WTC11 (cell line): ENCODE measurements at regions of chr2 and their contacts with region 1.

Region 1: DNA sequence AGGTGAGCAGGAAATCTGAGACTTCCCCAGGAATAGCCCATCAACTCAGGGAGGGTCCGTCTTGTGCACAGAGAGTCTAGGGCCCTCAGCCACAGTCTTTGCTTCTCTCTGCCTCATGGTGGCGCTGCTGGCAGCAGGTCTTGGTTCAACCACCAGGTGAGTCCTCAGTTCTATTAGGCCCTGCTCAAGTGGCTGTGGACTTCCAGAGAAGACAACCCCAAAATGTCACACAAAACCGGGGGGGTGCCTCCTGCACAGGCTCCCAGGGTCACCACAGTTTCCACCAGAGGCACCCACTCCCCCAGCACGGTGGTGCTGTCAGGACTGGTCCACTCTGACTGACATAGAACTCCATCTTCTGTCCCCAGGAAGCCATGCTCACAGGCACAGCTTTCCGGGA is 2.4 kb upstream of the CHRNG start:
- DNase-seq: peak; percentile 73
- ATAC-seq: peak; percentile 75
- H3K4me3 Mint-ChIP-seq: no peak overlapping the region
- H3K27ac Mint-ChIP-seq: no peak overlapping the region
- H3K4me1 Mint-ChIP-seq: peaks cover 25% of the 10 kb centered on the region
- H3K27me3 Mint-ChIP-seq: peaks cover 15% of the 10 kb centered on the region
- CTCF ChIP-seq: peak; percentile 67

Region 2: DNA sequence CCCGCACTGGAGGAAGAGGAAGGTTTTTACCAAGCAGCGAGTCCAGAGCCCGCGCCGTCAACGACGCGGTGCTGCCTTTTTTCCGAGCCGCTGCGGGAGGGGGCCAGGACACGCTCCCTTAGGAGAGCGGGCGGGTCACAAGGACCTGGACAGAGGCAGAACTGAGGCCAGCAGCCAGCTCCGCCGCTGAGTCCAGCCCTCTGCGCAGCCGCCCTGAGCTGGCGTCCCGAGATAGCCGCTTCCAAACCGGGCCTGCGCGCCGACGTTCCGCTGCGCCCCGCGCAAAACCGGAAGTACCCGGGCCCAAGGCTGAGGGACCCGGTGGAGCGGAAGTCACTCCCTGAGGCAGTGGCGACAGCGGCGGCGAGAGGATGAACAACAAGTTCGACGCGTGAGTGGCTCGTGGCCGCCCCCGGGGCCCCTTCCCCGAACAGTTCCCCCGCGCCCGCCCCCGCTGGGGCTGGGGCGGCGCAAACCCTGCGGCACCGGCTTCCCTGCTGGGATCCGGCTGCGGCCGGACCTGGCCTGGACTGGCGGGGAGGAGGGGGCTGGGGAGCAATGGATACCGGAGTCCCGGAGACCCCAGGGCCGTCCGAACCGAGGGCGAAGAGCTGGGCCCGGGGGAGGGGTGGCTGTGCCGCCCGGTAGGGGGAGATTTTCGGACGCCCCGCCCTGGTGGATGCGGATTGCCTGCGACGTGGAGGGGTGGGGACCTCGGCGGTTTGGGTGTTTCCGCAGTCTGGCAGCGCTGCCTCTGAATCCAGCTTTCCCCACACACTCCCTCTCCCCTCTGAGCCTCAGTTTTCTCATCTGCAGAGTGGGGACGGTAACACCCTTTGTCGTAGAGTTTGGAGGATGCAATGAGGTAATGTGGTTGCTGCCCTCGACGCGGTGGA is 13.5 kb after region 1 on chr2 and contains the starts of genes EIF4E2 and TIGD1:
- CTCF ChIA-PET with region 1: interaction called, 10 read pairs
- POLR2A ChIA-PET with region 1: interaction called, 6 read pairs
- DNase-seq: peak; percentile 94
- ATAC-seq: peak; percentile 94
- H3K4me3 Mint-ChIP-seq: peak within 1 kb of the TSS; percentile 95
- H3K27ac Mint-ChIP-seq: peak within 1 kb of the TSS; percentile 95
- H3K4me1 Mint-ChIP-seq: peaks cover 13% of the 10 kb centered on the region
- H3K27me3 Mint-ChIP-seq: peaks cover 3% of the 10 kb centered on the region
- CTCF ChIP-seq: no peak
- total RNA-seq, gene EIF4E2: 90.6 to 97.8 TPM (median 95.9 TPM) in 3 replicates
- total RNA-seq, gene TIGD1: 5.2 to 9.0 TPM (median 6.1 TPM) in 3 replicates

Region 3: DNA sequence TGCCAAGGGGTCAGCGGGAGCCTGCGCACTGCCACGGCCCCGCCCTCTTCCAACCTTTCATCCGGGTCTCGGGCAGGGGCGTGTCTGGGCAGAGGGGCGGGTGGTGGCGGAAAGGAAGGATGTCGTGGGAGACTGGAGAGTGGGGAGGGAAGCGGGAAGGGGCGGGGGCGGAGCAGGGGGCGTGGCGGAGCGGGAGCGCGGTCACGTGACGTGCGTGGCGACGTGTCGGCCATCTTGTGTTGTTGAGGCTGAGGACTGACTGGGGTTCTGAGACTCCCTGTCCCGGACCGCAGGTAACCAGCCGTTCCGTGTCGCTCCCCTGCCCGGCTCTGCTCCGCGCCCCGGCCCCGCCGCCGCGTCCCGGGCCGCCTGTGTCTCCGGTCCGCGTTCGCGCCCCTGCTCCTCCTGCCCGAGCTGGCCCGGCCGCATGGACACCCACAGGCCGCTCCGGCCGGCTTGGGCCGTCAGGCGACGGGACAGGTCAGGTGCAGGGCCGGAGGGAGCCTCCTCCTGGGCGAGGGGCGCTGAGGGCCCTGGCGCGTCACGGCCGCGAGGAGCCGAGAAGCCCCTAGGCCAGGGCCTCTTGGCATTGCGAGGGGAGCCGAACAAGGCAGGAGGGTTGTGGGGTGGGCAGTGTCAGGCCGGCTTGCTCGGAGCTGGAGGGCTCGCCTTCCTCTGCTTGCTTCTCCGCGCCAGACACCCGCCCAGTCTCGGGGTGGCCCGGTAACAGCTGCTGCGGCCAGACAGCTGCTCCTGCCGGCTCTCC is 160.2 kb after region 1 on chr2 and contains the start of gene GIGYF2:
- CTCF ChIA-PET with region 1: interaction called, 10 read pairs
- POLR2A ChIA-PET with region 1: no interaction called
- DNase-seq: peak; percentile 98
- ATAC-seq: peak; percentile 93
- H3K4me3 Mint-ChIP-seq: peak within 1 kb of the TSS; percentile 98
- H3K27ac Mint-ChIP-seq: peak within 1 kb of the TSS; percentile 78
- H3K4me1 Mint-ChIP-seq: peaks cover 33% of the 10 kb centered on the region
- H3K27me3 Mint-ChIP-seq: no peaks in the 10 kb centered on the region
- CTCF ChIP-seq: no peak
- total RNA-seq, gene GIGYF2: 49.3 to 53.1 TPM (median 52.0 TPM) in 3 replicates